ENCODE measurements at regions of chr9 and their contacts with region 1.

Region 1: GRCh38 chr9:127519301-127520166 is 68.2 kb downstream of the LRSAM1 start:
- DNase-seq: no peak
- H3K4me3 ChIP-seq: no peak overlapping the region
- H3K27ac ChIP-seq: no peak overlapping the region
- H3K4me1 ChIP-seq: peaks cover 2 to 7% (median 5%) of the 10 kb centered on the region in 4 experiments; a peak in 5 of 7 replicates
- H3K27me3 ChIP-seq: no peaks in the 10 kb centered on the region
- CTCF ChIP-seq: no peak
- EP300 ChIP-seq: no peak
- POLR2A ChIP-seq: no peak
- RAD21 ChIP-seq: no peak

Region 2: DNA sequence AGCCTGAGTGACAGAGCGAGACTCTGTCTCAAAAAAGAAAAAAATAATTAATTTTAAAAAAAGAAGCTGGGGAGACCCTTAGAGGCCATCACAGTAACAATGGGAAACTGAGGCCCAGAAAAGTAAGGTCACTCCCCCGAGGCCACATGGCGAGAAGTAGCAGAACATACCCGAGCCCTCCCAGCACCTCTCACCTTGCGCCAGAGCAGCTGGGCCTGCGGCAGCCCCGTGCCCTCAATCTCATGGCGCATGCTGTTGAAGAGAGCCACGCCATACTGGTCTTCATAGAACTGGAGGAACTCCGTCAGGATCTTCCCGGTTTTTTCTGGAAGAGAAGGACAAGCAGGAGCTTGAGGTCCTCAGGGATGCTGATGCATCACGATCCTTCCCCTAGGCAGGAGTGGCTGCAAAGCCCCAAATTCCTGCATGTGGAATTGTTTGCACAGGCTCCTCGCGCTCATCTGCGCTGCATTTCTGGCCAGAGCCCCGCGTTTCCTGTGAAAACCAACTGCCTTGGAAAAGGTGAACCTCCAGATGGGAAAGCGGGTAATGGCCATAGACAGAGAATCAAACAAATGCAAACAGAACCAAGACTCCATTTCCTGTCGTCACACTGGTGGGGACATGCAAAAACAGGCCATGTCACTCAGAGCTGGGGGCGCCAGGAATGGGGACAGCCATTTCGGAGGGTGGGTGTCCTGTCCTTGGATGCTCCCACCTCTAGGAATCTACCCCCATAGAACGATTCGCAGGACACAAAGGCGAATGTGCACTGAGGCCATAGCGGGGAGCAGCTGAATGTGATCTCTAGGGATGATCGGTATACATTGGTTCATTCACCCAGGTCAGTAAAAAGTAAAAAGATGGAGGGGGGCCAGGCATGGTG is 12.2 kb after region 1 on chr9:
- CTCF ChIA-PET with region 1: interaction called, 105 read pairs
- POLR2A ChIA-PET with region 1: interaction called, 3 read pairs
- DNase-seq: no peak
- H3K4me3 ChIP-seq: no peak overlapping the region
- H3K27ac ChIP-seq: 0 out of 2 replicates have a peak overlapping the region, but pooled peaks have one; percentile 13
- H3K4me1 ChIP-seq: peaks cover 6 to 27% (median 14%) of the 10 kb centered on the region in 4 experiments
- H3K27me3 ChIP-seq: no peaks in the 10 kb centered on the region
- CTCF ChIP-seq: no peak
- EP300 ChIP-seq: no peak
- POLR2A ChIP-seq: no peak
- RAD21 ChIP-seq: no peak

Region 3: GRCh38 chr9:127545196-127546124 is 25.9 kb after region 1 on chr9:
- CTCF ChIA-PET with region 1: interaction called, 105 read pairs
- POLR2A ChIA-PET with region 1: no interaction called
- DNase-seq: no peak
- H3K4me3 ChIP-seq: no peak overlapping the region
- H3K27ac ChIP-seq: peak overlapping the region; percentile 18; the same call in 1 of the 2 replicates
- H3K4me1 ChIP-seq: peaks cover 0 to 20% (median 8%) of the 10 kb centered on the region in 4 experiments; a peak in 5 of 7 replicates
- H3K27me3 ChIP-seq: no peaks in the 10 kb centered on the region
- CTCF ChIP-seq: no peak
- EP300 ChIP-seq: no peak
- POLR2A ChIP-seq: no peak
- RAD21 ChIP-seq: no peak

Measured in H1 (cell line).